ENCODE measurements at regions of chr18 and their contacts with region 1.

Region 1: DNA sequence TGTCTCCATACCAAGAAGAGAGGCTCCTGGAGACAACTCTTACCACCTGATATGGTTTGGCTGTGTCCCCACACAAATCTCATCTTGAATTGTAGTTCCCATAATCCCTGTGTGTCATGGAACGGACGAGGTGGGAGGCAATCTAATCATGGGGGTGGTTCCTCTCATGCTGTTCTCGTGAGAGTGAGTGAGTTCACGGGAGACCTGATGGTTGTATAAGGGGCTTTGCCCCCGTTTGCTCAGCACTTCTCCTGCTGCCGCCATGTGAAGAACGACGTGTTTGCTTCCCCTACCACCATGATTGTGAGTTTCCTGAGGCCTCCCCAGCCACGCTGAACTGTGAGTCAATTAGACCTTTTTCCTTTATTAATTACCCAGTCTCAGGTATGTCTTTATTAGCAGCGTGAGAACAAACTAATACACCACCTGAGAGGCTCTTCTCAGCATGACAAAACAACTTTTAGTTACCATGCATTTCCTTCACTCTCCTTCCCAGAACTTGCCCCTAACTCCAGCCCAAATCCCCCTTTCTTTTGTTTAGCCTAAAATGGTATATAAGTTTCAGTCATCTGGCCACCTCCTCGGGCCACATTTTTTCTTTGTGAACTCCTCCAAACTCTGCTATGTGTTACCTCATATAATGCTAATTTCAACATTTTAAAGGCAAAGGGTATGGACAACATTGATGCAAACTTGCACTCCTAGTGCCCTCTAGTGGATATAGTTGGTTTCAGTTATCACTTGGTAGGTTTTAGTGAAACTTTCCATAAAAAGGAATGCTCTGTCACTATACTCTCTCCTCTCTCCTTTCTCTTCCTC is 58.6 kb upstream of the SLC25A52 start:
- DNase-seq: peak; percentile 68
- H3K4me3 ChIP-seq: no peak overlapping the region
- H3K27ac ChIP-seq: no peak overlapping the region
- H3K4me1 ChIP-seq: no peaks in the 10 kb centered on the region
- H3K27me3 ChIP-seq: peaks cover 1% of the 10 kb centered on the region
- CTCF ChIP-seq: peak; percentile 80

Region 2: DNA sequence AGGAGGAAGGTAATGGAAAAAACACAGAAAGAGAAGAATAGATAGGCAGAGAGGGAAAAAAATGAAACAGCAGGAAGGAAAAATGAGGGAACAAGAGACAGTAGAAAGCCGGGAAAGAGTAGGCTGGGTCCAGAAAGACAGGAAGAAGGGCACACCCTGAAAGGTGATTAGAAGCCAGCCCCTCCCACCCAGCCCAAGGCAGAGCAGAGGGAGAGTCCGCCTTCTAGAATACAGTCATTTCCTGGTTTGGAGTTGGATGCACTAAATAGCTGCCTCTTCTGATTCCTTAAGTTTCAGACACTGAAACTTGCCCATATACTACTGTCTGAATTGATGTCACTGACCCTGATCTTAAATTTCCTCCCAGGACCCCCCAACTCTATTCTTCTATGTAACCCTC is 389.7 kb before region 1 on chr18:
- CTCF ChIA-PET with region 1: no interaction called
- POLR2A ChIA-PET with region 1: no interaction called
- intact Hi-C with region 1: no loop called
- DNase-seq: no peak
- H3K4me3 ChIP-seq: no peak overlapping the region
- H3K27ac ChIP-seq: no peak overlapping the region
- H3K4me1 ChIP-seq: no peaks in the 10 kb centered on the region
- H3K27me3 ChIP-seq: peaks cover 6% of the 10 kb centered on the region
- CTCF ChIP-seq: no peak

Region 3: DNA sequence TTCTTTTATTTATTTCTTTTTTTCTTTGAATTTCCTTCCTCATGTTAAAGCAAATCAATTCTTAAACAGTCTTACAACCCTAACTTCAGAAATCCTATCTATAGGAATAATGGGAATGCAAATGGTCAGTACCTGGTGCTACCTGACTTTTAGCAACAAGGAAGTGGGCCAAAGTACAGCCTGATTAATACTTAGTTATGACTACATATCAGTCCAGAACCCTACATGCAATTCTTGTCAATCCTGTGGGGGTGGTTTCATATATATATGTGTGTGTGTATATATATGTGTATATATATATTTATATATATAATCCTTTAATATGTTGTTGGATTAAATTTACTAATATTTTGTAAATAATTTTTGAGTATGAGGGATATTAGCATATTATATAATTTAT is 138.4 kb after region 1 on chr18:
- CTCF ChIA-PET with region 1: no interaction called
- POLR2A ChIA-PET with region 1: interaction called, 5 read pairs
- intact Hi-C with region 1: loop called (anchors 5 kb)
- DNase-seq: no peak
- H3K4me3 ChIP-seq: no peak overlapping the region
- H3K27ac ChIP-seq: no peak overlapping the region
- H3K4me1 ChIP-seq: no peaks in the 10 kb centered on the region
- H3K27me3 ChIP-seq: no peaks in the 10 kb centered on the region
- CTCF ChIP-seq: no peak

Measured in A673 (cell line).